ENCODE measurements at regions of chr18 and their contacts with region 1.

Region 1: GRCh38 chr18:23131693-23132319 is 3.5 kb upstream of the CABLES1 start:
- DNase-seq: no peak
- H3K4me3 ChIP-seq: no peak overlapping the region
- H3K27ac ChIP-seq: no peak overlapping the region
- H3K4me1 ChIP-seq: peaks cover 20 to 54% (median 29%) of the 10 kb centered on the region in 6 donors
- H3K27me3 ChIP-seq: peaks cover 0 to 50% (median 20%) of the 10 kb centered on the region in 7 donors
- CTCF ChIP-seq: peak; percentile 47 to 83 (median 74)
- POLR2A ChIP-seq: no peak

Region 2: GRCh38 chr18:23356915-23357601 is 225.3 kb after region 1 on chr18:
- intact Hi-C with region 1: loop called (anchors 5 kb)
- DNase-seq: no peak
- H3K4me3 ChIP-seq: no peak overlapping the region
- H3K27ac ChIP-seq: peak overlapping the region in 7 of 8 donors; percentile 14 to 66 (median 41)
- H3K4me1 ChIP-seq: peaks cover 0 to 51% (median 39%) of the 10 kb centered on the region in 6 donors
- H3K27me3 ChIP-seq: no peaks in the 10 kb centered on the region
- CTCF ChIP-seq: no peak
- POLR2A ChIP-seq: no peak

Region 3: GRCh38 chr18:23416298-23416697 is 284.5 kb after region 1 on chr18:
- intact Hi-C with region 1: loop called (anchors 10 kb)
- DNase-seq: no peak
- H3K4me3 ChIP-seq: no peak overlapping the region
- H3K27ac ChIP-seq: peak overlapping the region in 2 of 8 donors; percentile 36 to 40
- H3K4me1 ChIP-seq: peaks cover 0 to 28% (median 0%) of the 10 kb centered on the region in 6 donors
- H3K27me3 ChIP-seq: no peaks in the 10 kb centered on the region
- CTCF ChIP-seq: no peak
- POLR2A ChIP-seq: no peak

Region 4: DNA sequence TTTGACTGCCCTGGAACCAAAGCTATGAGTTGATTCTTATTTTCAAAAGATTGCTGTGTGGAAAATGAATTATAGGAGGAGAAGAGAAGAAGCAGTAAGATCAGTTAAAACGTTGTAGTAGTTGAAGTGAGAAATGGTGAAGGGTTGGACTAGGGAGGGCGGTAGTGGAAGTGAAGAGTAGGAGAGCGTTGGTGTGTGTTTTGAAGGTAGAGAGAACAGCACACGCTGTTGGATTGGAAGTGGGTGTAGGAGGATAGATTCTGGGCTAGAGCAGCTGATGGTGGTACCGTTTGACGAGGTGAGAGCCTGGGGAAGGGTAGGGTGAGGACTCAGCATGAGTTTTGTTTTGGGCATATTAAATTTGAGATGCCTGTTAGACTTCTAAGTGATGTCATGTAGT is 339.7 kb after region 1 on chr18:
- intact Hi-C with region 1: no loop called
- DNase-seq: no peak
- H3K4me3 ChIP-seq: no peak overlapping the region
- H3K27ac ChIP-seq: no peak overlapping the region
- H3K4me1 ChIP-seq: no peaks in the 10 kb centered on the region
- H3K27me3 ChIP-seq: no peaks in the 10 kb centered on the region
- CTCF ChIP-seq: no peak
- POLR2A ChIP-seq: no peak

Measured in spleen (tissue), 13 donors.